MCF 10A (cell line): ENCODE measurements at regions of chr4 and their contacts with region 1.

Region 1: DNA sequence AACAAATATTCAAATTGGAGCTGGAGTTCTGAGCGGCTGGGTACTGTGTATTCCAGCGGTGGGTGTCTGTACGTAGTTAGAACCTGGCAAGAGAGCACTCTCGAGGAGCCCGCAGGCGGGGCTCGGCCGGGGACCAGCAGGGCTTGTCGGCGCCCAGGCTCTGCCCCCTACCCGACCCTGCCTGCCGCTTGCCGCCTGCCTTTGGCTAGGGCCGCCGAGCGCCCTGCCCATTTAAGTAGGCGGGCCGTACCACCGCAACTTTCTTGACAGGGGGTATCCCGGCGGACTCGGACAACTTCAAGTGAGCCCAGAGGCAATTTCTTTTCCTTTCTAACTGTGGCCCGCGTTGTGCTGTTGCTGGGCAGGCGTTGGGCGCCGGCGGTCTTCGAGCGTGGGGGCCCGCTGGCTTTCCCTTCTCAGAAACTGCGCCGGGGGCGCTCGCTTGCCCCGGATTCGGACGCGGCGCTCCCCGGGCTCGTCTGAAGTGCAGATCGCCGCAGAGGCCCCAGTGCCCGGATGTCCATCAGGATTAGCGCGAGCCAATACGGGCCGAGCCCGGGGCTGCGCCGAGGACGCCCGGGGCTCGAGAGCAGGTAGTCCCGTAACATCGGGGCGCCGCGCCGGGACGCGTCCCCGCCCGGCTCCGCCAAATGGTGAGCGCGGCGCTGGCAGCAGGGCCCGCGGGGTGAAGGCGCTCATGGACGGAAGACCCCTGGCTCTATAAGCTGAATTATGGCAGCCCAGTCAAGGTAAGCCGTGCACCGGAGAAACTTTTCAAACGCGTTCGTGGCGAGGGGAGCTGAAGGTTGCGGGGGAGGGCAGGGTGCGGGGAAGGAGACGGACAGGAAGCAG is 72.1 kb downstream of the AFF1 start:
- DNase-seq: peak; percentile 91
- H3K4me3 Mint-ChIP-seq: peak overlapping the region; percentile 75
- H3K27ac Mint-ChIP-seq: peak overlapping the region; percentile 65
- H3K4me1 Mint-ChIP-seq: peaks cover 31% of the 10 kb centered on the region
- H3K27me3 Mint-ChIP-seq: no peaks in the 10 kb centered on the region
- CTCF ChIP-seq: peak; percentile 26

Region 2: DNA sequence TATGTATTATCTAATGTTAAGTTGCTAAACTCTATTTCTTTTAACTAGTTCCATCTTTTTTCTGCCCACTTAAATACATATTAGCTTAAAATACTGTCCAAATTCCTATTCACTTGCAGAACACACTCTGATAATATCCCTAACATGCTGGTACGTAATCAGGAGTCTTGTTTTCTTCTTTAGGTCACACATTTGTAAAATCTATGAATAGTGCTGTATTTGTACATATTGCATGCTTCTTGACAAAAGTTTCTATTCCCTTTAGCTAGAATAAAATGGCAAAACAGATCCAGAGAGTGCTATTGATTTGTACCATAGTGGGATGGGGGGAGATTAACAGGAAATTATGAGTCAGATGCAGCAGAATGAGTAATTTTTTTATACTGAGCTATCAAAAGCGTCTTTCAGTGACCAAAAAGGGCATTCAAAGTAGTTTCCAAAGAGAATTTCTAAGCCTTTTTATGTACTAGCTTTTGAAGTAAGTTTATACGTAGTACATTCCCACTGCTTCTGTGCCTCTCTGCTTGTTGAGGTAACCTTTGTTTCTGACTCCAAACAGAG is 286.3 kb before region 1 on chr4:
- CTCF ChIA-PET with region 1: no interaction called
- POLR2A ChIA-PET with region 1: no interaction called
- intact Hi-C with region 1: no loop called
- DNase-seq: no peak
- H3K4me3 Mint-ChIP-seq: no peak overlapping the region
- H3K27ac Mint-ChIP-seq: no peak overlapping the region
- H3K4me1 Mint-ChIP-seq: no peaks in the 10 kb centered on the region
- H3K27me3 Mint-ChIP-seq: no peaks in the 10 kb centered on the region
- CTCF ChIP-seq: no peak

Region 3: DNA sequence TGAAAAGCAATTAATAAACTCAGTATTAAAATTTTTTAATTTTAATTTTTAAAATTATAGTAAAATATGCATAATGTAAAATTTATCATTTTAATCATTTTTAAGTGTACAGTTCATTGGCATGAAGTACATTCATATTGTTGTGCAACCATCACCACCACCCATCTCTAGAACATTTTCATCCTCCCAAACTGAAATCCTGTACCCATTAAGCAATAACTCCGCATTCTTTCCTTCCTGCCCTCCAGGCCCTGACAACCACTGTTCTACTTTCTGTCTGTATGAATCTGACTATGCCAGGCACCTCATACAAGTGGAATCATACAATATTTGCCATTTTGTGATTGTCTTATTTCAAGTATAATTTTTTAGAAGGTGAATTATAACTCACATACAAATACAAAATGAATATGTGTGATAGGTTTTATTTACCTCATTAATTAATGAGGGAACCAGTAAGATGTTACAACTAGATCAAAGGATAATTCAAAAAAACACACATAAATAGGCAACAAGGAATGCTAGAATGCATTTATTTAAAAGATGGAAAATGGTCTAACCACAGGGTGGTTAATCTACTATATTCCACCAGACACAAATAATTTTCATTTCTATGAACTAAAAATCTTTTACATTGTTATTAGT is 85.2 kb before region 1 on chr4:
- CTCF ChIA-PET with region 1: interaction called, 30 read pairs
- POLR2A ChIA-PET with region 1: interaction called, 83 read pairs
- intact Hi-C with region 1: loop called (anchors 1 kb)
- DNase-seq: peak; percentile 89
- H3K4me3 Mint-ChIP-seq: peak overlapping the region; percentile 48
- H3K27ac Mint-ChIP-seq: peak overlapping the region; percentile 84
- H3K4me1 Mint-ChIP-seq: peaks cover 52% of the 10 kb centered on the region
- H3K27me3 Mint-ChIP-seq: no peaks in the 10 kb centered on the region
- CTCF ChIP-seq: no peak

Region 4: GRCh38 chr4:86934771-86935565 is 71.9 kb before region 1 on chr4 and contains the start of gene AFF1:
- CTCF ChIA-PET with region 1: interaction called, 10 read pairs
- POLR2A ChIA-PET with region 1: interaction called, 256 read pairs
- intact Hi-C with region 1: loop called (anchors 1 kb)
- DNase-seq: peak; percentile 88
- H3K4me3 Mint-ChIP-seq: peak within 1 kb of the TSS; percentile 85
- H3K27ac Mint-ChIP-seq: peak within 1 kb of the TSS; percentile 91
- H3K4me1 Mint-ChIP-seq: peaks cover 35% of the 10 kb centered on the region
- H3K27me3 Mint-ChIP-seq: no peaks in the 10 kb centered on the region
- CTCF ChIP-seq: peak; percentile 23
- total RNA-seq, gene AFF1: 56.2 and 61.9 TPM in 2 replicates

Region 5: DNA sequence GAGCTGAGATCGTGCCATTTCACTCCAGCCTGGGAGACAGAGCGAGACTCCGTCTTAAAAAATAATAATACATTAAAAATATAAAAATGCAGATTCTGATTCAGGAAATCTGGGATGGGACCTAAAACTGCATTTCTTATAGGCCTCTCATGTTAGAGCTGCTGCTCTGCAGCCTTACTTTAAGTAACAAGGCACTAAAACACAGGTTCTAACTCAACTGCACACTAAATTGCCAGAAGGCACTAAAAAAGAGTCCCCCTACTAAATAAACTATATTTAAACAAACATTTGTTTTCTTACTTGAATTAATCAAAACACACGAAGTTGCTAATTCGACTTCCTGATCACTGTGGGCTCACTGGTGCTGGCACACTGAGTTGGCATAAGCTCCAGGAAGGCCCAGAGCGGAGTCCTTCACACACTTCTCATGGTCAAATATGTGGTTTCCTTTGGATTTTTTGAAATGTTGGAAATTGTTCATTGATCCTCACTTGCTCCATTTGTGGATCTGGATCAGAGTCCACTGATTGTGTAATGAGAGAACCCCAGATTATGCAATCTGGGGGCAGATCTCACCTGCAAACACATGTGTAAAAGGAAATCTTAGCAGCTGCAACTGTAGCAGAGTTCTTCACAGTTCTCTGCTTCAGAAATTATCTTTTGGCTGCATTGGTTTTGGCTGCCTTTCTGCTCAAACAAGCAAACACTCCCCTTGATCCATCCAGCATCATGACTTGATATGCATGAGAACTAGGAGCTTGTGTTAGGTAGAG is 12.8 kb before region 1 on chr4:
- CTCF ChIA-PET with region 1: interaction called, 5 read pairs
- POLR2A ChIA-PET with region 1: interaction called, 10 read pairs
- intact Hi-C with region 1: no loop called
- DNase-seq: no peak
- H3K4me3 Mint-ChIP-seq: no peak overlapping the region
- H3K27ac Mint-ChIP-seq: no peak overlapping the region
- H3K4me1 Mint-ChIP-seq: peaks cover 9% of the 10 kb centered on the region
- H3K27me3 Mint-ChIP-seq: no peaks in the 10 kb centered on the region
- CTCF ChIP-seq: no peak

Region 6: GRCh38 chr4:87060957-87061356 is 54.1 kb after region 1 on chr4:
- CTCF ChIA-PET with region 1: no interaction called
- POLR2A ChIA-PET with region 1: interaction called, 3 read pairs
- intact Hi-C with region 1: loop called (anchors 1 kb)
- DNase-seq: peak; percentile 62
- H3K4me3 Mint-ChIP-seq: no peak overlapping the region
- H3K27ac Mint-ChIP-seq: peak overlapping the region; percentile 80
- H3K4me1 Mint-ChIP-seq: peaks cover 33% of the 10 kb centered on the region
- H3K27me3 Mint-ChIP-seq: no peaks in the 10 kb centered on the region
- CTCF ChIP-seq: no peak

Region 7: GRCh38 chr4:87093443-87094123 is 86.7 kb after region 1 on chr4:
- CTCF ChIA-PET with region 1: interaction called, 11 read pairs
- POLR2A ChIA-PET with region 1: interaction called, 52 read pairs
- intact Hi-C with region 1: loop called (anchors 1 kb)
- DNase-seq: peak; percentile 59
- H3K4me3 Mint-ChIP-seq: peak overlapping the region; percentile 23
- H3K27ac Mint-ChIP-seq: peak overlapping the region; percentile 87
- H3K4me1 Mint-ChIP-seq: peaks cover 25% of the 10 kb centered on the region
- H3K27me3 Mint-ChIP-seq: no peaks in the 10 kb centered on the region
- CTCF ChIP-seq: peak; percentile 57

Region 8: DNA sequence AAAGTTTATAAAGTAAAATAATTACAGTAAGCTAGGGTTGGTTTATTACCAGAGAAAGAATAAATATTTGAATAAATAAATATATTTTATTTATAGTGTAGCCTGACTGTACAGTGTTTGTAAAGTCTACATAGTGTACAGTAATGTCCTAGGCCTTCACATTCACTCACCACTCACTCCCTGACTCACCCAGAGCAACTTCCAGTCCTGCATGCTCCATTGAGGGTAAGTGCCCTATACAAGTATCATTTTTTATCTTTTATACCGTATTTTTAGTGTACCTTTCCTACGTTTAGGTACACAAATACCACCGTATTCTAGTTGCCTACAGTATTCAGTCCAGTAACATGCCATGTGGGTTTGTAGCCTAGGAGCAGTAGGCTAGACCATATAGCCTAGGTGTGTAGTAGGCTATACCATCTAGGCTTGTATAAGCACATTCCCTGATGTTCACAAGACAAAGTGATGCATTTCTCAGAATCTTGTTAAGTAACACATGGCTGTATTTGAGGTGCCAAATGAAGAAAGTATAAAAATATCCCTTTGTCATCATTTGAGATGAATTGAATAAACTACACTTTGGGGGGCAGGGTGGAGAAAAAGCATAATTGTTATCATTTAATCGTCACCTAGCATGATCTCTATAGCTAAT is 228.2 kb after region 1 on chr4:
- CTCF ChIA-PET with region 1: no interaction called
- POLR2A ChIA-PET with region 1: no interaction called
- intact Hi-C with region 1: loop called (anchors 10 kb)
- DNase-seq: no peak
- H3K4me3 Mint-ChIP-seq: peak overlapping the region; percentile 74
- H3K27ac Mint-ChIP-seq: peak overlapping the region; percentile 79
- H3K4me1 Mint-ChIP-seq: peaks cover 6% of the 10 kb centered on the region
- H3K27me3 Mint-ChIP-seq: no peaks in the 10 kb centered on the region
- CTCF ChIP-seq: no peak

Region 9: DNA sequence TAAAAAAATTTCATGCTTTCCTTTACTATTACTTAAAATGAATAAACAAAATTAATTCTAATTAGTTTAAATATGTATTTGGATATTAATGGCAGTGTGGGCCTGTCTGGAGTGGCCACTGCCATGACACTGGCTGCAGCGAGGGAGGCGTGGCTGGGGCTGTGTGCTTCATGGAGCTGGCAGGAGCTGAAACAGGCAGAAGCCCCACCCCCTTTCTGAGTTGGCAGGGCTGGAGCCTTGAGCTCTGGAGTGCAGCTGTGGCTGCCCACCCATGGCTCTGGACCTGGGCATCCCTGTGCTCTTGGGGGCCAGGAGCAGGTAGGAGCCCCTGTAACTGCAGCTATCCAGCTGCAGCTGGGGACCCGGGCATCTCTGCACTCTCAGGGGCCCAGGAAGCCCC is 392.2 kb after region 1 on chr4:
- CTCF ChIA-PET with region 1: no interaction called
- POLR2A ChIA-PET with region 1: no interaction called
- intact Hi-C with region 1: no loop called
- DNase-seq: no peak
- H3K4me3 Mint-ChIP-seq: no peak overlapping the region
- H3K27ac Mint-ChIP-seq: no peak overlapping the region
- H3K4me1 Mint-ChIP-seq: peaks cover 13% of the 10 kb centered on the region
- H3K27me3 Mint-ChIP-seq: no peaks in the 10 kb centered on the region
- CTCF ChIP-seq: no peak